ENCODE measurements at regions of chr3 and their contacts with region 1.

Region 1: DNA sequence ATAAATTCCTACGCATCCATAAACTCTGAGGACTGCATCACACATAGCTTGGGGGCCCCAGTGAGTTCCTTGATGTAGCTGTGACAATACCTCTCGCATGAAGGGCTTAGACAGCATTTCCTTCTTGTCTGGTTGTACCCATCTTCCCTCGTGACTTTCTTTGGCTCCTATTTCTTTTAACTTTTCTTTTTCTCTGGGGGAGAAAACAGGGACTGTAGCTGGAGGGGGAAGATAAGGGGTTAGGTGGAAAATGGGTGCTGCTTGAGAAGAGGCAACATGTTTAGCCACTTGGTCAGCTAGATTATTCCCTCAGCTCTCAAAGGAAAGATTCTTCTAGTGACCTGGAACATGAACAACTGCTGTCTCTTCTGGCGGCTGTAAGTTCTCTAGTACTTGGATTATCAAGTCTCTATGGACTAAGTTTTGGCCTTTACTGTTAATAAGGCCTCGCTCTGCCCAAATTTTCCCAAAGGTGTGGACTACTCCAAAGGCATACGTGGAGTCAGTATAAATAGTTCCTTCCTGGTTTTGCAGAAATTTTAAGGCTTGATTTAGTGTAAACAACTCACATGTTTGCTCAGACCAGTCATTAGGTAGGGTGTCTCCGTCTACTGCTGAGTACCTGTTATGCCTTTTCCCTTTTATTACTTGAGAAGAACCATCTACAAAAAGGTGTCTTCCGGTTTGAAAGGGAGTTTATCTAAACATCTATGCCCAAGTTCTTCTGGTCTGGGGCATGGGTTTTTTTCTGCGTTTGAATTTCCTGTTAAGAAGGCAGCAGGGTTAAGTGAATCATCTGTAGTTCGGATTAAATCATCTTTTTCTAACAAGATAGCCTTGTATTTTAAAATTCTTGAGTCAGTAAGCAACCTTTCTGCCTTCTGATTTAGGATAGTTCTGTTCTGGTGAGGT is 21.0 kb upstream of the ATG7 start:
- DNase-seq: no peak
- ATAC-seq: peak in 1 of 8 donors; percentile 46
- H3K4me3 ChIP-seq: no peak overlapping the region
- H3K27ac ChIP-seq: no peak overlapping the region
- H3K4me1 ChIP-seq: no peaks in the 10 kb centered on the region
- H3K27me3 ChIP-seq: no peaks in the 10 kb centered on the region
- CTCF ChIP-seq: no peak

Region 2: DNA sequence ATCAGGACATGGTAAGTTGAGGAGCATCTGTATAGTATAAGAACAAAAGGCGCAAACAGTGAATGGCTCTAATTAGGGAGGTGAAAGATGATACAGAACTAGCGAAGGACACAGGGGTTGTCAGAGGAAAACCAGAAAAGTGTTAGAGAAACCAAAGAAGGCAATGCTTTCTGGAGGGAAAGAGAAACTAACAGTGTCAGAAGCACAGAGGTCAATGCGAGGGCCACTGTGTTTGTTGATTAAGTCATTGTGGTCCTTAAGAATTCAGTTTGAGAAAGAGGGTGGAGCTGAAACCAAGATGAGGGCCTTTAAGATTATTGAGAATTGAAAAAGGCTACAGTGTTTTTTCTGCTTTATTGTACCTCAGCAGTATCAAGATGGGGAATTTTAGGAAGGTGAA is 49.8 kb after region 1 on chr3:
- intact Hi-C with region 1: loop called in 1 of 10 experiments (anchors 10 kb)
- DNase-seq: no peak
- ATAC-seq: no peak
- H3K4me3 ChIP-seq: no peak overlapping the region
- H3K27ac ChIP-seq: no peak overlapping the region
- H3K4me1 ChIP-seq: peaks cover 0 to 14% (median 8%) of the 10 kb centered on the region in 9 donors
- H3K27me3 ChIP-seq: no peaks in the 10 kb centered on the region
- CTCF ChIP-seq: no peak

Region 3: GRCh38 chr3:11335056-11335608 is 84.0 kb after region 1 on chr3:
- intact Hi-C with region 1: no loop called
- DNase-seq: peak in 1 of 2 donors; percentile 26
- ATAC-seq: peak in 7 of 8 donors; percentile 44 to 72 (median 57)
- H3K4me3 ChIP-seq: no peak overlapping the region
- H3K27ac ChIP-seq: no peak overlapping the region
- H3K4me1 ChIP-seq: no peaks in the 10 kb centered on the region
- H3K27me3 ChIP-seq: no peaks in the 10 kb centered on the region
- CTCF ChIP-seq: peak; percentile 17 to 73 (median 68)

Region 4: DNA sequence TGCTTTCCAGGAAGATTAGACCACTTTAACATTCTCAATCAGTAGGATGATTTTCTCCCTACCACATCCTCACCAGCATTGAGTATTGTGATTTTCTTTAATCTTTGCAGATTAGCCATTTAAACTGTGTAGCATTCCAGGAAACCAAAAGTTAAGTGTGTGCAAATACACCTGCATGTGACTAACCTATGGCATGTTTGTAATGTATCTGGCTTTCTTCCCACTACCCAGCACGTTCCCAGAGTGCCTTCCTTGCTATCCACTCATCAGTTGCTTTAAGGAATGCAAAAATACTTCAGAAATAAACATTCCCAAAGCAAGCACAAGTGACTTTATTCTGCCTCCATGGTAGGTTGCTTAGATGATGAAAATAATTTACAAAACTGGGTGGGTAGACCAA is 95.3 kb after region 1 on chr3:
- intact Hi-C with region 1: no loop called
- DNase-seq: no peak
- ATAC-seq: no peak
- H3K4me3 ChIP-seq: no peak overlapping the region
- H3K27ac ChIP-seq: no peak overlapping the region
- H3K4me1 ChIP-seq: no peaks in the 10 kb centered on the region
- H3K27me3 ChIP-seq: no peaks in the 10 kb centered on the region
- CTCF ChIP-seq: no peak

Measured in heart right ventricle (tissue), 16 donors.